Caco-2 (cell line): ENCODE measurements at regions of chr3 and their contacts with region 1.

Region 1: DNA sequence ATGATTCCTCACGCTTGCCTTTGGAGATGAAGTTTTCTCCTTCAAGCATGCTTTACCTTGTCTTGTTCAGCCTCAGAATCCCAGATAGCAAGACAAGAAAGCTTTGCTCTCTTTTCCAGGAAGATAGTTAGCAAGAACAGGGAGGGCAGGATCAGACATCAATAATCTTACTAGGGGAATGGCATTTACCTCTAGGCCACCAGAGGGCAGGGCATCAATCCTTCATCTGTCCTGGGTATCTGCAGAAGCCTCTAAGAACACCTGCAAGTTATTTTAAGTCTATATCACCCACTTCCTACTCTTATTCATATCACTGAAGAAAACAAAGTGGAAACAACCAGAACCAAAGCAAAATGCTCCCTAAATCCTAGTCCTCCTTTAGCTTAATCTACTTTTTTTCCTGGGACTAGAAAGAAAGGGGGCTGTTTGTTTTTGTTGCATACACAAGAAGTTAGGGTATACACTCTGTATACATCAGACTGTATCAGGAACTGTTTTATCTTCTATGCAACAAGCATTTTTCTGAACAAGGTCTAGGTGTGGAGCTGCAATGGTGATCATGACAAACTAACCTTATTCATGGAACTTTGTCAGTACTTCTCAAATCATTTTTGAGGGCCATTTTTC is 862.5 kb downstream of the CADM2 start:
- DNase-seq: peak in 1 of 2 experiments; percentile 42
- H3K4me3 ChIP-seq: no peak overlapping the region
- H3K4me3 Mint-ChIP-seq: no peak overlapping the region
- H3K27ac Mint-ChIP-seq: no peak overlapping the region
- H3K4me1 ChIP-seq: no peaks in the 10 kb centered on the region
- H3K4me1 Mint-ChIP-seq: no peaks in the 10 kb centered on the region
- H3K27me3 ChIP-seq: no peaks in the 10 kb centered on the region
- H3K27me3 Mint-ChIP-seq: peaks cover 3% of the 10 kb centered on the region
- CTCF ChIP-seq: peak; percentile 35 to 55

Region 2: DNA sequence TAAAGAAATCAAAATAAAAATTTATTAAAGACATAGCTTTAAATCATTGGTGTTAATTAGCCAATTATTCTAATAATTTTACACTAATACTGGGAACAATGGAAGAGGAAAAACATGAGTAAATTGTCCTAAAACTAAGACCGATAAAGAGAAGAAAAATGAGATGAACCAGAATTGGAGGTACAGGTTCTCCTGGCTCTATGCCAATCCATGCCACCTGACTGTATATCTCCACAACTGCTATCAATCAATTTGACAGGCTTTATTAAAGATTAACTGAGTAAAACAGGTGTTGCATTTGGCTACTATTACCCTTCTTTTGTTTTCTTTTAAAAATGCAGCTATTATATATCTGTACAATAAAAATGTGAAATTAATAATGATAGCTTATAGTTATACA is 12.5 kb before region 1 on chr3:
- CTCF ChIA-PET with region 1: no interaction called
- POLR2A ChIA-PET with region 1: no interaction called
- intact Hi-C with region 1: no loop called
- DNase-seq: no peak
- H3K4me3 ChIP-seq: no peak overlapping the region
- H3K4me3 Mint-ChIP-seq: no peak overlapping the region
- H3K27ac Mint-ChIP-seq: no peak overlapping the region
- H3K4me1 ChIP-seq: no peaks in the 10 kb centered on the region
- H3K4me1 Mint-ChIP-seq: no peaks in the 10 kb centered on the region
- H3K27me3 ChIP-seq: no peaks in the 10 kb centered on the region; the same call in 1 of the 2 replicates
- H3K27me3 Mint-ChIP-seq: peaks cover 3% of the 10 kb centered on the region
- CTCF ChIP-seq: no peak

Region 3: GRCh38 chr3:86245360-86245759 is 424.1 kb after region 1 on chr3:
- CTCF ChIA-PET with region 1: no interaction called
- POLR2A ChIA-PET with region 1: no interaction called
- intact Hi-C with region 1: loop called (anchors 1 kb)
- DNase-seq: no peak
- H3K4me3 ChIP-seq: no peak overlapping the region
- H3K4me3 Mint-ChIP-seq: no peak overlapping the region
- H3K27ac Mint-ChIP-seq: no peak overlapping the region
- H3K4me1 ChIP-seq: no peaks in the 10 kb centered on the region
- H3K4me1 Mint-ChIP-seq: no peaks in the 10 kb centered on the region
- H3K27me3 ChIP-seq: no peaks in the 10 kb centered on the region
- H3K27me3 Mint-ChIP-seq: no peaks in the 10 kb centered on the region
- CTCF ChIP-seq: peak in 1 of 2 experiments; percentile 31

Region 4: DNA sequence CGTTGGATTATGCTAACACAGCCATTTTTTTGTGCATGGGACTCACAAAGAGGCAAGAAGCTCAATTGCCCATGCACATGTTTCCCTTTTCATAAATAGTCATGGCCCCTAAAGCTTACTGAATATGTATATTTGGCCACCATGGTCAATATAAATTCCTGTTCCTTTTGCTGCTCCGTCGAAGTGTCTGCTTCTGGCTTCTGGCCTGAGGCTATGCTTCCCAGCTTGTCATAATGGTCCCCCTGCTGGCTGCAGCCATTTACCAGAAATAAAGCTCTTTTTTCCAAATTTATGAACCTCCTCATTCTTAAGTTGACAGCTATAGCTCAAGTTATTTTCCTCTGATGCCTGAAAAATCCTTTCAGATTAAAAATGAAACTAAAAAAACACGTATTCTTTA is 567.6 kb after region 1 on chr3:
- CTCF ChIA-PET with region 1: no interaction called
- POLR2A ChIA-PET with region 1: no interaction called
- intact Hi-C with region 1: loop called (anchors 1 kb)
- DNase-seq: peak; percentile 19 to 29
- H3K4me3 ChIP-seq: no peak overlapping the region
- H3K4me3 Mint-ChIP-seq: no peak overlapping the region
- H3K27ac Mint-ChIP-seq: no peak overlapping the region
- H3K4me1 ChIP-seq: no peaks in the 10 kb centered on the region
- H3K4me1 Mint-ChIP-seq: no peaks in the 10 kb centered on the region
- H3K27me3 ChIP-seq: no peaks in the 10 kb centered on the region
- H3K27me3 Mint-ChIP-seq: peaks cover 10% of the 10 kb centered on the region
- CTCF ChIP-seq: peak; percentile 44 to 54

Region 5: DNA sequence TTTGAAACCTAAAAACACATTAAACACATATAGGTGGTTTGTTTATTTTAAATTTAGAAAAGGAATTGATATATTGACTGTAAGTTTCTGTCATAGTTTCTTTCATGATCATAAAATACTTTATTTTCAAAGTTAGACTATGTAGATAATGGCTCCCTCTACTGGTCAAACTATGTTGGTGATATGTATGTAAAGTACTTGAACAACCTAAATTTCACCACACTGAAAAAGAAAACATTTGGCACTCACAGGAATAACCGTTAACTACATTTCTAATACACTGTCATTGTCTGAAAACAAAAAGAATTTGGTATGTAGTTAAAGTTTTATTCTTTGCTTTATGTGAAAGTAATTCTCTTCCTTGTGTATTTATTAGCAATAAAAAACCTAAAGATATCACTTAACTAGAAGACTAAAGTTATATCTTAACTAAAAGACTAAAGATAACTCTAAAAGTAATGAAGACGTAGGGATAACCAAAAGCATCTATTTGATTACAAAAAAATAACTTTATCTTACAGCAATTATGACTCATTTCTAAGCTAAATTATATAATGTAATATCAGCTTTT is 742.2 kb after region 1 on chr3:
- CTCF ChIA-PET with region 1: no interaction called
- POLR2A ChIA-PET with region 1: no interaction called
- intact Hi-C with region 1: loop called (anchors 1 kb)
- DNase-seq: peak in 1 of 2 experiments; percentile 13
- H3K4me3 ChIP-seq: no peak overlapping the region
- H3K4me3 Mint-ChIP-seq: no peak overlapping the region
- H3K27ac Mint-ChIP-seq: no peak overlapping the region
- H3K4me1 ChIP-seq: no peaks in the 10 kb centered on the region
- H3K4me1 Mint-ChIP-seq: no peaks in the 10 kb centered on the region
- H3K27me3 ChIP-seq: no peaks in the 10 kb centered on the region
- H3K27me3 Mint-ChIP-seq: no peaks in the 10 kb centered on the region
- CTCF ChIP-seq: peak; percentile 48 to 56